Vagina (tissue), 2 donors: ENCODE measurements at regions of chr6 and their contacts with region 1.

Region 1: DNA sequence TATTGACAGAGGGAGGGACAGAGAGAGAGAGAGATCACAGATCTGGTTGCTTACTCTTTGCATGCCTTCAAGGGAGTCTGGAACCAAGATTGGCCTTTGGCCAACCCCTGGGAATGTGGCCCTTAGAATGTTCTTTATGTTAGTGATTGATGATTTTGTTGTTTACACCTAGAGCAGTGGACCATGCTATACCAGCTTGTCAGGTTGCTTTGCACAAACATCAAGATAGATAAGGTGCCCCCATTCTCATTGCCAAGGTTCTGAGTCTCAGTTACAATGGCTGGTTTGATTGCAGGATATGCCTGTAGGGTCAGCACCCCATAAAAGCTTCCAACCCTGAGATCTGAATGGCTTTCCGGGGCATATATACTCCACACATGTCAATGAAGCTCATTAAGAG is 53.5 kb upstream of the SLC2A12 start:
- DNase-seq: no peak
- H3K4me3 ChIP-seq: no peak overlapping the region
- H3K27ac ChIP-seq: no peak overlapping the region
- H3K4me1 ChIP-seq: no peaks in the 10 kb centered on the region
- H3K27me3 ChIP-seq: no peaks in the 10 kb centered on the region
- CTCF ChIP-seq: no peak
- POLR2A ChIP-seq: no peak

Region 2: DNA sequence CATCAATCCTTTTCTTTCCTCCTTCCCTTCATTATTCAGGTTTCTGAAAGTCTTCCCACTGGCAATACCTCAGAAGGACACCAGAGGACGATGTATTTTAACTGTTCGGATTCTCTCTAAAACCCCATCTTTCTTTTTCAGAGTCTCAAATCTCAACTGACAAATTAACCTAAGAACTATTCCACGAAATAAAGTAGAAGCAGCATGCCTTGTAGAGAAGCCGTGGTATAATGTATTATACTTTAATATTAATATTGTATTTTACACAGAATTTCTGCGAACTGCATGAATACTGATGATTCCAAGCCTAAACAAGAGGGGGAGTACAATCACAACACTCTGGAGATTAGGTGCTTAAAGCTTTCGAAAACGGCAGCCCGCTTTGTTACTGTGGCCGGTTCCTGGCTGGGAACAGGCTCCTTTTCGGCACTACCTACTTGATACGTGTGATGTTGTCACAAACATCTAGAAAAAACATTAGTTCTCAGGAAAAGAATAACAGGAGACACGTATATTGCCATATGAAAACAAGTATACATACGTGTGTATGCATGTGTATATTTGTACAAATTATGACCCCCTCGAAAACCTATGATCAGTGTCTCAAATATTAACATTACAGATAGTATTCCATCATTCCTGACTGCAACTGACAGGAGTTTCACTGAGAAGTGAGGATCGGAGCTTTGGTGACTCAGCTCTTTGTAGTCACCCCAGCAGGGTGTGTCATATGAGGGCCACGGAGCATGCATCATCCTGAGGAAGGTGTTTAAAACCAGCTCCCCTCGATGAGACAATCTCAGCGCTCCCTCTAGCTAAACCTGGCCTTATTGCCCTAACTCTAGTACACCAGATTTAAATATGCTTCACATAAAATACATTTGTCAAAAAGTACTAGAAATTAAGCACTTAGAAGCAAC is 536.7 kb before region 1 on chr6:
- intact Hi-C with region 1: loop called (anchors 10 kb)
- DNase-seq: no peak
- H3K4me3 ChIP-seq: peak overlapping the region; percentile 26 to 32
- H3K27ac ChIP-seq: peak overlapping the region; percentile 47
- H3K4me1 ChIP-seq: peaks cover 15% of the 10 kb centered on the region
- H3K27me3 ChIP-seq: no peaks in the 10 kb centered on the region
- CTCF ChIP-seq: peak; percentile 87 to 97 (median 90)
- POLR2A ChIP-seq: no peak

Region 3: DNA sequence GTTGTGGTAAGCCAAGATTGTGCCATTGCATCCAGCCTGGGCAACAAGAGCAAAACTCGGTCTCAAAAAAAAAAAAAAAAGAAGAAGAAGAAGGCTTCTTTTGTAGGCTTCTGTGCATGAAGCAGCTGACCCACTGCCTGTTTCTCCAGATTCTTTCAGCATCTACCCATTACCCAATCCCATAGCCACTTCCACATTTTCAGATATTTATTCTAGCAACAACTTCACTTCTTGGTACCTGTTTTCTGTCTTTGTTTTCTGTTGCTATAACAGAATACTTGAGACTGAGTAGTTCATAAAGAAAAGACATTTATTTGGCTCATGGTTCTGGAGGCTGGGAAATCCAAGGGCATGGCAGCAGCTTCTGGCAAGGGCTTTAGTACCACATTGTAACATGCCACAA is 307.3 kb after region 1 on chr6:
- intact Hi-C with region 1: no loop called
- DNase-seq: no peak
- H3K4me3 ChIP-seq: no peak overlapping the region
- H3K27ac ChIP-seq: no peak overlapping the region
- H3K4me1 ChIP-seq: no peaks in the 10 kb centered on the region
- H3K27me3 ChIP-seq: no peaks in the 10 kb centered on the region
- CTCF ChIP-seq: no peak
- POLR2A ChIP-seq: no peak